Mammary epithelial cell (primary cell): ENCODE measurements at regions of chr17 and their contacts with region 1.

Region 1: GRCh38 chr17:8041249-8041928 is 2.5 kb downstream of the ALOX15B start:
- DNase-seq: peak; percentile 84
- H3K4me3 ChIP-seq: no peak overlapping the region
- H3K27ac ChIP-seq: peak overlapping the region; percentile 67
- H3K4me1 ChIP-seq: peaks cover 32% of the 10 kb centered on the region
- H3K27me3 ChIP-seq: no peaks in the 10 kb centered on the region
- CTCF ChIP-seq: peak; percentile 54 to 66

Region 2: GRCh38 chr17:7745748-7746470 is 295.5 kb before region 1 on chr17:
- CTCF ChIA-PET with region 1: no interaction called
- dilution Hi-C with region 1: no loop called
- in situ Hi-C with region 1: no loop called
- intact Hi-C with region 1: loop called (anchors 2 kb)
- DNase-seq: peak; percentile 60
- H3K4me3 ChIP-seq: no peak overlapping the region
- H3K27ac ChIP-seq: peak overlapping the region; percentile 12
- H3K4me1 ChIP-seq: peaks cover 45% of the 10 kb centered on the region
- H3K27me3 ChIP-seq: no peaks in the 10 kb centered on the region
- CTCF ChIP-seq: peak in 1 of 2 donors; percentile 13

Region 3: DNA sequence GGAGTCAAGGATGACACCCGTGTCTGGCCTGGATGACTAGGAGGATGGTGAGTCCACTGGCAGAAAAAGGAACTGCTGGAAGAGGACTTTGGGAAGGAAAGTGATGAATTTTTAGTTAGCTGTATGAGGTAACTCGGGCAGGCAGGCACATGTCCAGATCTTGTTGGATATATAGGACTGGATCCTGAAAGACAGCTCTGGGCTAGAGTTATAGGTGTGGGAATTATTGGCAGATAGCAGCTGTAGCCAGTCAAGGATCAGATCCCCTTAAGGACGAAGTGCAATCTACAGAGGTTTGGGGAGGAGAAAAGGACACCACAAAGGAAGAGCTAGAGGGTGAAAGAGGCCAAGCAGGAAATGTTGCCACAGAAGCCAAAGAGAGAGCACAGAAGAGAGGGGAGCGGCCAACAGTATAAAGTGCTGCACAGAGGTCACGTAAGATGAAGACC is 173.5 kb before region 1 on chr17:
- CTCF ChIA-PET with region 1: interaction called, 13 read pairs
- dilution Hi-C with region 1: no loop called
- in situ Hi-C with region 1: no loop called
- intact Hi-C with region 1: no loop called
- DNase-seq: peak; percentile 74
- H3K4me3 ChIP-seq: no peak overlapping the region
- H3K27ac ChIP-seq: no peak overlapping the region
- H3K4me1 ChIP-seq: peaks cover 12% of the 10 kb centered on the region
- H3K27me3 ChIP-seq: no peaks in the 10 kb centered on the region
- CTCF ChIP-seq: peak in 1 of 2 donors; percentile 6

Region 4: DNA sequence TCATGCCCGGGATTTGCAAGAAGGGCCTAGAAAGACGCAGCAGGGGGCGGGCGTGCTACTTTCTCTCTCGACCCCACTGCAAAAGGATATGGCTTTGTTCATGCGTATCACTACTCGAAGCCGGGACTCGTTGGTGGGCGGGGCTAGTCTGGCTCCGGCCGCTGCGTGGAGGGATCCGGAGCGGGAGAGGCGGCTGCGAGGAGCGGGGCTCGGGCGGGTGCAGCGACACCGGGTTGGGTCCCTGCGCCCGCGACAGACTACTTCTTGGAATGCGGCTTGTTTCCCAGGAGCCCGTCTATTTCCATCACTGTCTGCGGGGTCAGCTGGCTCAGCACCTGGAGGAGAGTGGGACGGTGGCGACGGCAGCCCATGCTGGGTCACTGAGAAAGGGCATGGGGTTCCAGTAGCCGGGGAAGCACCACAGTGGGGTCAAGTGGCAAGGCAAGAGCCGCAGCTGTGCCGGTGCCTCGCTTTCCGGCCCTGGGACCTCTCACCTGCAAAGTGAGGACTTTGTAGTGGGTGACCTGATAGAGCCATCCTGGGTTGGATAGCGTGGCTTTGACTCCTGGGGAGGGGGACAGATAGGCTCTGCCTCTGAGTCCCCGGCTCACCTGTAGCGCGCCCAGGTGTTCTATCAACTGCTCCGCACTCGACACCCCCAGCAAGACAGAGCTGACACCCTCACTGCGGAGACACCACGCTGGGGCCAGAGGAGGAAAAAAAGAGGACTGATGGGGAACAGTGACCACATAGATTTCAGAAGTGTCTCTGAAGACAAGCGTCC is 118.4 kb before region 1 on chr17:
- CTCF ChIA-PET with region 1: no interaction called
- dilution Hi-C with region 1: no loop called
- in situ Hi-C with region 1: loop called in 1 of 2 experiments (anchors 10 kb)
- intact Hi-C with region 1: no loop called
- DNase-seq: no peak
- H3K4me3 ChIP-seq: peak overlapping the region in 2 of 3 experiments; percentile 21 to 35
- H3K27ac ChIP-seq: no peak overlapping the region
- H3K4me1 ChIP-seq: peaks cover 9% of the 10 kb centered on the region
- H3K27me3 ChIP-seq: no peaks in the 10 kb centered on the region
- CTCF ChIP-seq: no peak

Region 5: GRCh38 chr17:7989781-7990655 is 51.4 kb before region 1 on chr17:
- CTCF ChIA-PET with region 1: interaction called, 4 read pairs
- dilution Hi-C with region 1: no loop called
- in situ Hi-C with region 1: loop called in 1 of 2 experiments (anchors 5 kb)
- intact Hi-C with region 1: loop called (anchors 1 kb)
- DNase-seq: peak; percentile 65
- H3K4me3 ChIP-seq: peak overlapping the region; percentile 55 to 76 (median 55)
- H3K27ac ChIP-seq: peak overlapping the region; percentile 26
- H3K4me1 ChIP-seq: peaks cover 21% of the 10 kb centered on the region
- H3K27me3 ChIP-seq: no peaks in the 10 kb centered on the region
- CTCF ChIP-seq: peak; percentile 85 to 96

Region 6: DNA sequence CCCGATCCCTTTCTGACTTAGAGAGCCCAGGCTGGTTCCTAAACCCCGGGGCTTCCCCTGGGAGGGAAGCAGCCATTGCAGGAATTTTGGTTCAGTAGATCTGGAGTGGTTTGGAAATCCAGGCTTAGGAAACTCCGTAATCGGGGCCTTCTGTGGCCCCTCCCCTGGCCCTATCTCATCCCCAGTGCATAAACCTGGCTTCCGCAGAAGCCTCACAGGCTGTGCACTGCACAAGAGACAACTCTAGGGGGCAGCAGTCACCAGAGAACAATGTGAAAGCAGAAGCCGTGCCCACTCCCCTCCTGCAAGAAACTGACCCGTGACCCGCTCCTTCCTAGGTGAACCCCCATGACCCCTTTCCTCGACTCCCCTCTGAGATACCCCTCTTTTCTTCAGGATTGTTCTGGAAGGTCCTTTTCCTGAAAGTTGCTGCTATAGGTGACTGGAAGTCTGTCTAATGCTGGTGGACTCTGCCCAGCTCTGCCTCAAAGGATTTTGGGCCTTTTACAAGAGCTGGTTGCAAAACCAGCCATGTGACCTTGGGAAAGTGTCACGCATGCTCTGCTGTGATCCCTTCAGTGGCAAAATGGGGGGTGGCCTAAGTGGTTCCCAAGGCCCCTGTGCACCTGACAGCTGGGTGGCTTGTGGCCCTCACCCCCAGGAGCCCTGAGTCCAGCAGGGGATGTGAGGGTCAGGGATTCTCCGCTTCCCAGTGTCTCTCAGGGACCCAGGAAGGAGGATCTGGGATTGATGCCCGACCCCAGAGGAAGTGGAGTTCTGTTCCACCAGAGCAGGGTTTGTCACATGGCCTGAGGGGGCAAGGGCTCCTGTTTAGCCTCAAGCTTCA is 24.5 kb before region 1 on chr17:
- CTCF ChIA-PET with region 1: interaction called, 24 read pairs
- dilution Hi-C with region 1: no loop called
- in situ Hi-C with region 1: no loop called
- intact Hi-C with region 1: loop called (anchors 1 kb)
- DNase-seq: no peak
- H3K4me3 ChIP-seq: peak overlapping the region in 1 of 3 experiments; percentile 42
- H3K27ac ChIP-seq: no peak overlapping the region
- H3K4me1 ChIP-seq: peaks cover 48% of the 10 kb centered on the region
- H3K27me3 ChIP-seq: no peaks in the 10 kb centered on the region
- CTCF ChIP-seq: peak; percentile 80 to 83